ENCODE measurements at regions of chr17 and their contacts with region 1.

Region 1: DNA sequence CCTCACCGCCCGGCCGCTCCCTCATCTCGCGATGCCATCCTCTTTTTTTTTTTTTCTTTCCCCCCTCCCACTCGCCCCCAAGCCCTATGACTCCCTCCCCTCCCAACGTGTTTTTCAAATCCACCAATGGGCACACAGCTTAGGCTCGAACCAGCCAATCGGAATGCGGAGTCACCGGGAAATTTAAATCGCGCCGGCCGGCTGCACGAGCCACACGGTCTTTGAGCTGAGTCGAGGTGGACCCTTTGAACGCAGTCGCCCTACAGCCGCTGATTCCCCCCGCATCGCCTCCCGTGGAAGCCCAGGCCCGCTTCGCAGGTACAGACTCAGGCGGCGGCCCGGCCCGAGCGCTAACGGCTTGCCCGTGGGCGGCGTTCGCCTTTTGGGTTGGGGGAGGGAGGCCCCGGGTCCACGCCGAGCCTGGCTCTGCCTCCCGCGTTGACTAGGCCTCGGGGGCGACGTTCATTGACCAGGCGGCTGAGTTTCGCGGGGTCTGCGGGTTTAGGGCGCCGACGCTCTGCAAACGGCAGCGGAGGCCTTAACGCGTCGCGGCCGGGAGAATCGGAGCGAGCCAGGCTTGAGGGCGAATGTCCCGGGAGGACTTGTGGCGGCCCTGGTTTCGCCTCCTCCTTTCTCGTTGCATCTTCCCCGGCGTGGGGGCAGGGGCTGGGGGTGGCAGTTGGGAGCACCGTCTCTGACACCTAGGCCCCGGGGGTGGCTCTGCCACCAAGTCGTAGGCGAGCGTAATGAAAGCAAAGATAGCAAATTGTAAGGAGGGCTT is at the start of gene KPNA2:
- DNase-seq: peak; percentile 93 to 95
- ATAC-seq: peak; percentile 99 to 100
- H3K4me3 ChIP-seq: peak within 1 kb of the TSS; percentile 70 to 100 (median 96)
- H3K27ac ChIP-seq: peak within 1 kb of the TSS; percentile 84 to 96 (median 86)
- H3K4me1 ChIP-seq: peaks cover 12 to 13% of the 10 kb centered on the region in 2 donors
- H3K27me3 ChIP-seq: no peaks in the 10 kb centered on the region
- CTCF ChIP-seq: peak in 1 of 5 experiments; percentile 4
- POLR2A ChIP-seq: peak; percentile 79 to 95
- total RNA-seq, gene KPNA2: 14.5 to 23.3 (median 19.3) TPM

Region 2: GRCh38 chr17:67717624-67718329 is 317.9 kb before region 1 on chr17 and contains the start of gene NOL11:
- in situ Hi-C with region 1: no loop called
- intact Hi-C with region 1: loop called (anchors 10 kb)
- DNase-seq: peak; percentile 97 to 98
- ATAC-seq: peak; percentile 98
- H3K4me3 ChIP-seq: peak within 1 kb of the TSS; percentile 68 to 98 (median 78)
- H3K27ac ChIP-seq: peak within 1 kb of the TSS; percentile 83 to 92 (median 86)
- H3K4me1 ChIP-seq: peaks cover 20 to 23% of the 10 kb centered on the region in 2 donors
- H3K27me3 ChIP-seq: no peaks in the 10 kb centered on the region
- CTCF ChIP-seq: peak; percentile 89 to 98 (median 93)
- POLR2A ChIP-seq: peak; percentile 63 to 71
- total RNA-seq, gene NOL11: 22.2 to 40.9 (median 36.4) TPM

Region 3: GRCh38 chr17:67824735-67825626 is 210.7 kb before region 1 on chr17 and contains the start of gene BPTF:
- in situ Hi-C with region 1: no loop called
- intact Hi-C with region 1: loop called (anchors 5 kb)
- DNase-seq: peak; percentile 83 to 87
- ATAC-seq: peak; percentile 89 to 90
- H3K4me3 ChIP-seq: peak within 1 kb of the TSS; percentile 88 to 99 (median 90)
- H3K27ac ChIP-seq: peak within 1 kb of the TSS; percentile 88 to 91 (median 90)
- H3K4me1 ChIP-seq: peaks cover 32 to 34% of the 10 kb centered on the region in 2 donors
- H3K27me3 ChIP-seq: no peaks in the 10 kb centered on the region
- CTCF ChIP-seq: peak; percentile 76 to 99 (median 98)
- POLR2A ChIP-seq: peak; percentile 51 to 63
- total RNA-seq, gene BPTF: 29.3 to 43.9 (median 38.1) TPM

Region 4: GRCh38 chr17:67993596-67994361 is 41.9 kb before region 1 on chr17:
- in situ Hi-C with region 1: no loop called
- intact Hi-C with region 1: loop called (anchors 1 kb)
- DNase-seq: peak; percentile 66 to 80
- ATAC-seq: peak; percentile 79 to 82
- H3K4me3 ChIP-seq: peak overlapping the region; percentile 70 to 86 (median 83)
- H3K27ac ChIP-seq: peak overlapping the region; percentile 94 to 96 (median 94)
- H3K4me1 ChIP-seq: peaks cover 11 to 18% of the 10 kb centered on the region in 2 donors
- H3K27me3 ChIP-seq: no peaks in the 10 kb centered on the region
- CTCF ChIP-seq: no peak
- POLR2A ChIP-seq: peak; percentile 67 to 75

Region 5: GRCh38 chr17:68019675-68020408 is 15.9 kb before region 1 on chr17:
- in situ Hi-C with region 1: no loop called
- intact Hi-C with region 1: loop called (anchors 1 kb)
- DNase-seq: peak; percentile 87 to 95
- ATAC-seq: peak; percentile 94 to 97
- H3K4me3 ChIP-seq: peak overlapping the region; percentile 66 to 79 (median 69)
- H3K27ac ChIP-seq: peak overlapping the region; percentile 85 to 92 (median 89)
- H3K4me1 ChIP-seq: peaks cover 0 to 6% of the 10 kb centered on the region in 2 donors
- H3K27me3 ChIP-seq: no peaks in the 10 kb centered on the region
- CTCF ChIP-seq: peak; percentile 33 to 72 (median 58)
- POLR2A ChIP-seq: peak in 1 of 2 donors; percentile 35

Region 6: DNA sequence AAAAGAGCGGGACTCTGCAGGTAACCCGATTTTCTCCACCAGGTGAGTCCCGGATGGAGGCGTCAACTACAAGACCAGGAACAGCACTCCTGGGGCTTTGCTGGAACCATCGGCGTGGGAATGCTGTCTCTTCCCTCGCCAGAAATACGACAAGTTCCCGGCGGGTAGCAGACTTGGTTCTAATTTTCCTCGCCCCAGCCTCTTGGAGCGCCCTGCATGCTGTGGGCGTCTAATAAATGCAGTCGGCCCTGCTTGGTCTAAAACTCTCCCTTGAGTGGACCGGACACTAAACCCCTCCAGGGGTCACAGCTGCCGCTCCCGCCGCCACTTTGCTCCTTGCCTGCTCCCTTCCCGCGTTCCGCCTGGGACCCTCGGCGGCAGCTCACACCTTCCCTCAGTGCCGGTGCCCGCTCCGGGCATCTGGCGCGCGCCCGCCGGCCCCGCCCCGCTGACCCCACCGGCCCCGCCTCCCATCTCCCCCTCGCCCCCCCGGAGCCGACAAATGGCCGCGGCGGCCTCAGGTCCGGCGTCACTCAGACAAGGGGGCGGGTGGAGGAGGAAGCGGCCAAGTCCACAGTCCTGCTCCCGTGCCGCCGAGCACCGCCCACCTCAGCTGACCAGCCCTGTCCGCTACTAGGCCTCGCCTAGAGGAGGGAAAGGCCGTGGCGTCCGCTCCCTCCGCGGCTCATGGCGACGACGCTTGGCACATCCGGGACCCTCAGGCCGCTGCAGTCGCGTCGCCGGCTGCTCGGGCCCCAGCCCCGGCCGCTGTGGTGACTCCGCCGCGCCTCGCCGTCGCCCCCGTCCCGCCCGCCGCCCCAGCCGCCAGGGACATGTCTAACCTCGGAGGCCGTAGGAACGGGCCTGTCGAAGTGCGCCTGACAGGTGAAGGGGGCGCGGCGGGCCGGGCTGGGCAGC is 65.6 kb after region 1 on chr17:
- in situ Hi-C with region 1: no loop called
- intact Hi-C with region 1: loop called (anchors 1 kb)
- DNase-seq: peak; percentile 96
- ATAC-seq: peak; percentile 97 to 98
- H3K4me3 ChIP-seq: peak overlapping the region; percentile 79 to 99 (median 82)
- H3K27ac ChIP-seq: peak overlapping the region; percentile 86 to 97 (median 91)
- H3K4me1 ChIP-seq: peaks cover 13 to 14% of the 10 kb centered on the region in 2 donors
- H3K27me3 ChIP-seq: no peaks in the 10 kb centered on the region
- CTCF ChIP-seq: peak in 1 of 5 experiments; percentile 11
- POLR2A ChIP-seq: peak; percentile 84 to 95

Measured in gastrocnemius medialis (tissue), 4 donors.